ENCODE measurements at regions of chr15 and their contacts with region 1.

Region 1: GRCh38 chr15:90931737-90932659 is at the start of gene HDDC3:
- DNase-seq: peak; percentile 63
- ATAC-seq: peak; percentile 74
- H3K4me3 ChIP-seq: peak within 1 kb of the TSS; percentile 90
- H3K27ac ChIP-seq: peak within 1 kb of the TSS; percentile 85
- H3K4me1 ChIP-seq: peaks cover 35% of the 10 kb centered on the region
- H3K27me3 ChIP-seq: no peaks in the 10 kb centered on the region
- CTCF ChIP-seq: peak; percentile 91 to 98 (median 92)
- EP300 ChIP-seq: no peak
- POLR2A ChIP-seq: peak; percentile 86
- RAD21 ChIP-seq: peak; percentile 54; the same call in 1 of the 2 replicates
- polyA plus RNA-seq, gene HDDC3: 5.6 to 9.0 TPM

Region 2: DNA sequence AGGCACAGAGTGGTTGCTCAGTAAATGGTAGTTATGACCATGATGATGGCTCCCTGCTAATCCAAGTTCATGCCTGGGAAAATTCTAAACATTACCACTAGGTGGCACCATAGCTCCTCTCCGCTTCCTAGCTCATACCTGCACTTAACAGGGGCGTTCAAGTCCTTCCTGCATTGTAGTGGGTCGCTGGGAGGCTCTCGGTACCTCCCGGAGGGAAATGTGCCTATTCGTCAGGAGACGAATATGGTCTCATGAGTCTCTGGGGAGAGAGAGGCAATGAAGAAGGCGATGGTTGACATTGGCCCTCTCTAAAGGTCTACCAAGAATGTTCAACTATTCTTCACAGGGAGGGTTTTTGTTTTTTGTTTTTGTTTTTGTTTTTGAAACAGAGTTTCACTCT is 1191.9 kb before region 1 on chr15:
- CTCF ChIA-PET with region 1: no interaction called
- POLR2A ChIA-PET with region 1: no interaction called
- RAD21 ChIA-PET with region 1: no interaction called
- SMC1A ChIA-PET with region 1: no interaction called
- in situ Hi-C with region 1: no loop called
- intact Hi-C with region 1: no loop called
- DNase-seq: peak; percentile 43
- ATAC-seq: peak; percentile 98
- H3K4me3 ChIP-seq: no peak overlapping the region
- H3K27ac ChIP-seq: no peak overlapping the region
- H3K4me1 ChIP-seq: no peaks in the 10 kb centered on the region
- H3K27me3 ChIP-seq: no peaks in the 10 kb centered on the region
- CTCF ChIP-seq: peak; percentile 86 to 91 (median 91); a peak in 5 of 6 replicates
- EP300 ChIP-seq: no peak
- POLR2A ChIP-seq: no peak
- RAD21 ChIP-seq: peak; percentile 82

Region 3: DNA sequence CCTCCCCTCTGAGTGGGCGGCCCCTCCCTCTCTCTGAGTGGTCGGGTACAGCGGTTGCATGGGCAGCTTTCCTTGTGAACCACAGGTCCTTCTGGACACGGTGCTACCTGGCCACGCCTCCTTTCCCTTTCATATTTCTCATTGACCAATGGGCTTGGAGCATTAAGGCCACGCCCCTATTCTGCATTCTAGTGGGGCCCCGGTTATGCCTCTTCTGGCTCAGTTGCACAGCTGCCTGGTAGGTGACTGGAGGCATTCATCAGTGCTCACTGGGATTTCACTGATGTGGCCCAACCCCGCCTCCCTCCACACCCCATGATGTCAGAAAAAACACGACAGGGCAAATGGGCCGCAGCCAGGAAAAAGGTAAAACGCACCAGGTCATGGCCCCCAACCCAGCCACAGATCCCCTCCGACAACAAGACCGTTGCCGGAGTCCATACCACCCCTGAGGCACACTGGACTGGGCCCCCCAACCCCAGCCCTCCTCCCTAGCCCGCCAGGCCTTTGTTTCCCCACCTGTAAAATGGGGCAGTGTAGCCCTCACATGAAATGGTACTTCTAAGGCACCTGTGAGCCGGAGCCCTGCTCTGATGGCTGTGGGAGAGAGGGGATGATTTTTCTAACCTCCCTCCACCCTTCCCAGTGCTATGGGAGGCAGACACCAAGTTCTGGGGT is 640.2 kb before region 1 on chr15:
- CTCF ChIA-PET with region 1: interaction called, 15 read pairs
- POLR2A ChIA-PET with region 1: no interaction called
- RAD21 ChIA-PET with region 1: interaction called, 3 read pairs
- SMC1A ChIA-PET with region 1: no interaction called
- in situ Hi-C with region 1: no loop called
- intact Hi-C with region 1: no loop called
- DNase-seq: no peak
- ATAC-seq: peak; percentile 69
- H3K4me3 ChIP-seq: no peak overlapping the region
- H3K27ac ChIP-seq: no peak overlapping the region
- H3K4me1 ChIP-seq: no peaks in the 10 kb centered on the region
- H3K27me3 ChIP-seq: no peaks in the 10 kb centered on the region
- CTCF ChIP-seq: no peak
- EP300 ChIP-seq: no peak
- POLR2A ChIP-seq: no peak
- RAD21 ChIP-seq: no peak

Region 4: DNA sequence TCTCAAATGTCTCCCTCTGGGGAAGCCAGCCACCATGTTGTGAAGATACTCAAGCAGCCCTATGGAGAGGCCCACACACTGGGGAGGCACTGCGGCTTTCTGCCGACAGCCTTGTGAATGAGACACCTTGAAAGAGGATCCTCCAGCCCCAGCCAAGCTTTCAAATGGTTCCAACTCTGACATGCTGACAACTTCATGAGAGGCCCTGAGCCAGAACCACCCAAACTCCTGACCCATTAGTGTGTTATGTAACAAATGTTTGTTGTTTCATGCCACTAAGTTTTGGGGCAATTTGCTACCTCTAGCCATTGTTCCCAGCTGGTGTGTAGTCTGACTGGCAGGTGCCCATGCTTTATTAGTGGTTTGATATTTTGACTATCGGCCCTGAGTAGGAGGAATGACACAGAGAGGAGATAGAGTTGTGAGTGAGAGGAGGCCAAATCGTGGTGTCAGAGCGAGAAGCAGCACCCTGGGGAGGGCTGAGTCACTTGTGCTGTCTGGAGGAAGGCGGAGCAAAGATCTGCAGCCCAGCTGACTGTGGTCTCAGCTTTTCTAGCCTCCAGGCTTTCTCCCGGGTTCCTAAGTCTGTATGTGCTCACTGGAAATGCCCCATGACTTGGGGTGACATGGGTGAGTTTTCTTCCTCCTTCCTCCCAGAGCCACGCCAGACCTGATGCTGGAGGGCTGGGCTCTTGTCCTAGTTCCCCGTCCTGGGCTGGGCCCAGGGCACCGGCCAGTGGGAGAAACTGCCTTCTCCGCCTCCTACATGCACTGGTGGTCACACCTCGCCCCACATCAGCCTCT is 271.6 kb before region 1 on chr15:
- CTCF ChIA-PET with region 1: interaction called, 9 read pairs
- POLR2A ChIA-PET with region 1: interaction called, 5 read pairs
- RAD21 ChIA-PET with region 1: interaction called, 4 read pairs
- SMC1A ChIA-PET with region 1: no interaction called
- in situ Hi-C with region 1: no loop called
- intact Hi-C with region 1: loop called (anchors 5 kb)
- DNase-seq: peak; percentile 86
- ATAC-seq: peak; percentile 72
- H3K4me3 ChIP-seq: peak overlapping the region; percentile 58
- H3K27ac ChIP-seq: peak overlapping the region; percentile 100
- H3K4me1 ChIP-seq: peaks cover 73% of the 10 kb centered on the region
- H3K27me3 ChIP-seq: no peaks in the 10 kb centered on the region
- CTCF ChIP-seq: no peak
- EP300 ChIP-seq: 0 out of 4 replicates have a peak, but pooled peaks of 1 of the 2 experiments have one; percentile 29
- POLR2A ChIP-seq: peak; percentile 77
- RAD21 ChIP-seq: no peak

Region 5: GRCh38 chr15:90851114-90851513 is 80.9 kb before region 1 on chr15:
- CTCF ChIA-PET with region 1: interaction called, 11 read pairs
- POLR2A ChIA-PET with region 1: no interaction called
- RAD21 ChIA-PET with region 1: interaction called, 4 read pairs
- SMC1A ChIA-PET with region 1: interaction called, 4 read pairs
- in situ Hi-C with region 1: no loop called
- intact Hi-C with region 1: loop called (anchors 10 kb)
- DNase-seq: no peak
- ATAC-seq: no peak
- H3K4me3 ChIP-seq: no peak overlapping the region
- H3K27ac ChIP-seq: peak overlapping the region; percentile 32; the same call in 1 of the 2 replicates
- H3K4me1 ChIP-seq: peaks cover 44% of the 10 kb centered on the region
- H3K27me3 ChIP-seq: no peaks in the 10 kb centered on the region
- CTCF ChIP-seq: no peak
- EP300 ChIP-seq: no peak
- POLR2A ChIP-seq: no peak
- RAD21 ChIP-seq: no peak

Region 6: GRCh38 chr15:90895336-90896117 is 36.5 kb before region 1 on chr15:
- CTCF ChIA-PET with region 1: interaction called, 480 read pairs
- POLR2A ChIA-PET with region 1: interaction called, 113 read pairs
- RAD21 ChIA-PET with region 1: interaction called, 193 read pairs
- SMC1A ChIA-PET with region 1: interaction called, 225 read pairs
- in situ Hi-C with region 1: no loop called
- intact Hi-C with region 1: no loop called
- DNase-seq: no peak
- ATAC-seq: no peak
- H3K4me3 ChIP-seq: no peak overlapping the region
- H3K27ac ChIP-seq: no peak overlapping the region
- H3K4me1 ChIP-seq: peaks cover 17% of the 10 kb centered on the region
- H3K27me3 ChIP-seq: no peaks in the 10 kb centered on the region
- CTCF ChIP-seq: no peak
- EP300 ChIP-seq: no peak
- POLR2A ChIP-seq: no peak
- RAD21 ChIP-seq: no peak

Region 7: GRCh38 chr15:90982135-90982534 is 50.1 kb after region 1 on chr15:
- CTCF ChIA-PET with region 1: interaction called, 23 read pairs
- POLR2A ChIA-PET with region 1: interaction called, 3 read pairs
- RAD21 ChIA-PET with region 1: interaction called, 5 read pairs
- SMC1A ChIA-PET with region 1: interaction called, 8 read pairs
- in situ Hi-C with region 1: no loop called
- intact Hi-C with region 1: no loop called
- DNase-seq: no peak
- ATAC-seq: peak; percentile 75
- H3K4me3 ChIP-seq: no peak overlapping the region
- H3K27ac ChIP-seq: peak overlapping the region; percentile 79
- H3K4me1 ChIP-seq: peaks cover 27% of the 10 kb centered on the region
- H3K27me3 ChIP-seq: no peaks in the 10 kb centered on the region
- CTCF ChIP-seq: no peak
- EP300 ChIP-seq: no peak
- POLR2A ChIP-seq: no peak
- RAD21 ChIP-seq: no peak